ENCODE measurements at regions of chr10 and their contacts with region 1.

Region 1: GRCh38 chr10:132096223-132096622 is 30.5 kb downstream of the JAKMIP3 start:
- DNase-seq: peak; percentile 58 to 90
- H3K4me3 ChIP-seq: no peak overlapping the region; the same call in 1 of the 2 replicates
- H3K27ac ChIP-seq: peak overlapping the region; percentile 92
- H3K4me1 ChIP-seq: peaks cover 37% of the 10 kb centered on the region
- H3K27me3 ChIP-seq: no peaks in the 10 kb centered on the region
- CTCF ChIP-seq: no peak

Region 2: GRCh38 chr10:131792011-131792651 is 304.1 kb before region 1 on chr10:
- CTCF ChIA-PET with region 1: no interaction called
- POLR2A ChIA-PET with region 1: no interaction called
- intact Hi-C with region 1: no loop called
- DNase-seq: no peak
- H3K4me3 ChIP-seq: no peak overlapping the region
- H3K27ac ChIP-seq: no peak overlapping the region
- H3K4me1 ChIP-seq: no peaks in the 10 kb centered on the region
- H3K27me3 ChIP-seq: peaks cover 26% of the 10 kb centered on the region
- CTCF ChIP-seq: no peak

Region 3: GRCh38 chr10:131997366-131998049 is 98.7 kb before region 1 on chr10:
- CTCF ChIA-PET with region 1: no interaction called
- POLR2A ChIA-PET with region 1: interaction called, 4 read pairs
- intact Hi-C with region 1: loop called (anchors 10 kb)
- DNase-seq: peak; percentile 70 to 90
- H3K4me3 ChIP-seq: peak overlapping the region; percentile 22; the same call in 1 of the 2 replicates
- H3K27ac ChIP-seq: peak overlapping the region; percentile 71
- H3K4me1 ChIP-seq: peaks cover 26% of the 10 kb centered on the region
- H3K27me3 ChIP-seq: no peaks in the 10 kb centered on the region
- CTCF ChIP-seq: no peak

Region 4: DNA sequence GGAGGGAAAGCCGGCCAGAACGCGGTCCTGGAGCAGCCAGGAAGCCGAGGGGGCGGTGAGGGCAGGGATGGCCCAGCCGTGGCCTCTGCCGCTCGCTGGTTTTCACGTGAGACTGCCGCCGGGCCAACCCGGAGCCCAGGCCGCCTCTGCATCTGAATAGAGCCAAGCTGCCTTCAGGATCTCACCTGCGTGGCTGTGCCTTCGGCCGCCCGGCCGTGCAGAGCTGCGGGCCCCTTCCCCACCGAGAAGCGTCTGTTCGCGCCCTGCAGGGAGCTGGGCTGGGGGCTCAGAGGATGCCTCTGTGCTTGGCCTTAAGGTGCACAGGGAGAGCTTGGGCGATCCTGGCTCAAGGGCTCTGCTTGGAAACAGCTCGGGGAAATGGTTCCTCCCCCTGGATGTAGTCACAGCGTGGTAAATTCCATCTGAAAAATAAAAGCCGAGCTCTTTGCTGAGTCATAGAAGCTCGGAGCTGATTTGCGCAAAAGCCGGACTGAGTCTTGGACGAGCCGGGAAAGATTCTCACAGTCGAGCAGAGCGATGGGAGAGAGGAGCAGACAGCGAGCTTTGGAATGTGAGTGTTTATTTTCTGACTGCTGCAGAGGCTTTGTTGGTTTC is 30.6 kb before region 1 on chr10 and contains the start of gene JAKMIP3:
- CTCF ChIA-PET with region 1: no interaction called
- POLR2A ChIA-PET with region 1: interaction called, 8 read pairs
- intact Hi-C with region 1: loop called (anchors 2 kb)
- DNase-seq: peak; percentile 66 to 85
- H3K4me3 ChIP-seq: peak within 1 kb of the TSS; percentile 77
- H3K27ac ChIP-seq: peak within 1 kb of the TSS; percentile 77
- H3K4me1 ChIP-seq: peaks cover 21% of the 10 kb centered on the region; the same call in 1 of the 2 replicates
- H3K27me3 ChIP-seq: no peaks in the 10 kb centered on the region
- CTCF ChIP-seq: no peak
- total RNA-seq, gene JAKMIP3: 5.6 and 5.8 TPM in 2 replicates